ENCODE measurements at regions of chr3 and their contacts with region 1.

Region 1: DNA sequence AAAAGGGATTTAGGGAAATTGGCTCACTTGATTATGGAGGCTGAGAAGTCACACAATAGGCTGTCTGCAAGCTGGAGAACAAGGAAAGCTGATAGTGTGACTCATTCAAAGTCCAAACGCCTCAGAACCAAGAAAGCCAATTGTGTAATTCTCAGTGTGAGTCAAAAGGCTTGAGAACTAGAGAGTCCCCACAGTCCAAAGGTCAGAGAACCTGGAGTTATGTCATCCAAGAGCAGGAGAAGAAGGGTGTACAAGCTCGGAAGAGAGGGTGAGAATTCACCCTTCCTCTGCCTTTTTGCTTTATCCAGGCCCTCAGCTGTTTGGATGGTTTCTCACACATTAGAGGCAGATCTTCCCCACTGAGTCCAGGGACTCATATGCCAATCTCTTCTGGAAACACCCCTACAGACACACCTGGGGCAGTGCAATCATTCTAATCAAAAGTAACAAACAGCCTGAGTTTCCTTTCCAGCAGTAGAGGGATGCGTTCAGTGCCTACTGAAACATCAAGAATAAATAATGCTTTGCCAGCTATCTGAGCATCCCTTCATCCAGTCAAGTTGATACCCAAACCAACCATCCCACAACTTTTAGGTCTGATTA is 271.5 kb downstream of the SATB1 start:
- DNase-seq: peak; percentile 59 to 70
- H3K4me3 ChIP-seq: no peak overlapping the region
- H3K4me3 Mint-ChIP-seq: peak overlapping the region; percentile 29
- H3K27ac Mint-ChIP-seq: peak overlapping the region; percentile 17
- H3K4me1 ChIP-seq: peaks cover 9% of the 10 kb centered on the region; the same call in 1 of the 2 replicates
- H3K4me1 Mint-ChIP-seq: peaks cover 14% of the 10 kb centered on the region
- H3K27me3 ChIP-seq: no peaks in the 10 kb centered on the region
- H3K27me3 Mint-ChIP-seq: no peaks in the 10 kb centered on the region
- CTCF ChIP-seq: no peak

Region 2: GRCh38 chr3:17742108-17742879 is 411.4 kb before region 1 on chr3 and contains the start of gene TBC1D5:
- CTCF ChIA-PET with region 1: no interaction called
- POLR2A ChIA-PET with region 1: no interaction called
- intact Hi-C with region 1: loop called (anchors 2 kb)
- DNase-seq: peak; percentile 97
- H3K4me3 ChIP-seq: peak within 1 kb of the TSS; percentile 77
- H3K4me3 Mint-ChIP-seq: peak within 1 kb of the TSS; percentile 82
- H3K27ac Mint-ChIP-seq: peak within 1 kb of the TSS; percentile 80
- H3K4me1 ChIP-seq: peaks cover 11% of the 10 kb centered on the region; the same call in 1 of the 2 replicates
- H3K4me1 Mint-ChIP-seq: peaks cover 17% of the 10 kb centered on the region
- H3K27me3 ChIP-seq: no peaks in the 10 kb centered on the region
- H3K27me3 Mint-ChIP-seq: no peaks in the 10 kb centered on the region
- CTCF ChIP-seq: no peak
- total RNA-seq, gene TBC1D5: 36.4 and 36.5 TPM in 2 replicates

Region 3: GRCh38 chr3:18087988-18088387 is 65.7 kb before region 1 on chr3:
- CTCF ChIA-PET with region 1: no interaction called
- POLR2A ChIA-PET with region 1: no interaction called
- intact Hi-C with region 1: no loop called
- DNase-seq: no peak
- H3K4me3 ChIP-seq: no peak overlapping the region
- H3K4me3 Mint-ChIP-seq: no peak overlapping the region
- H3K27ac Mint-ChIP-seq: no peak overlapping the region
- H3K4me1 ChIP-seq: 0 out of 2 replicates have a peak, but pooled peaks cover 8% of the 10 kb centered on the region
- H3K4me1 Mint-ChIP-seq: peaks cover 11% of the 10 kb centered on the region
- H3K27me3 ChIP-seq: no peaks in the 10 kb centered on the region
- H3K27me3 Mint-ChIP-seq: no peaks in the 10 kb centered on the region
- CTCF ChIP-seq: no peak

Region 4: GRCh38 chr3:18098960-18099587 is 54.6 kb before region 1 on chr3:
- CTCF ChIA-PET with region 1: no interaction called
- POLR2A ChIA-PET with region 1: no interaction called
- intact Hi-C with region 1: no loop called
- DNase-seq: no peak
- H3K4me3 ChIP-seq: no peak overlapping the region
- H3K4me3 Mint-ChIP-seq: no peak overlapping the region
- H3K27ac Mint-ChIP-seq: peak overlapping the region; percentile 32
- H3K4me1 ChIP-seq: no peaks in the 10 kb centered on the region
- H3K4me1 Mint-ChIP-seq: peaks cover 6% of the 10 kb centered on the region
- H3K27me3 ChIP-seq: no peaks in the 10 kb centered on the region
- H3K27me3 Mint-ChIP-seq: no peaks in the 10 kb centered on the region
- CTCF ChIP-seq: no peak

Region 5: GRCh38 chr3:18245721-18246120 is 92.0 kb after region 1 on chr3:
- CTCF ChIA-PET with region 1: no interaction called
- POLR2A ChIA-PET with region 1: no interaction called
- intact Hi-C with region 1: no loop called
- DNase-seq: no peak
- H3K4me3 ChIP-seq: no peak overlapping the region
- H3K4me3 Mint-ChIP-seq: no peak overlapping the region
- H3K27ac Mint-ChIP-seq: no peak overlapping the region
- H3K4me1 ChIP-seq: no peaks in the 10 kb centered on the region
- H3K4me1 Mint-ChIP-seq: no peaks in the 10 kb centered on the region
- H3K27me3 ChIP-seq: no peaks in the 10 kb centered on the region
- H3K27me3 Mint-ChIP-seq: no peaks in the 10 kb centered on the region
- CTCF ChIP-seq: no peak